Mammary epithelial cell (primary cell): ENCODE measurements at regions of chr6 and their contacts with region 1.

Region 1: GRCh38 chr6:113632220-113632864 is 224.8 kb upstream of the MARCKS start:
- DNase-seq: peak; percentile 99
- H3K4me3 ChIP-seq: peak overlapping the region in 2 of 3 experiments; percentile 24
- H3K27ac ChIP-seq: peak overlapping the region; percentile 96
- H3K4me1 ChIP-seq: peaks cover 41% of the 10 kb centered on the region
- H3K27me3 ChIP-seq: no peaks in the 10 kb centered on the region
- CTCF ChIP-seq: no peak

Region 2: GRCh38 chr6:113352029-113352801 is 280.1 kb before region 1 on chr6:
- CTCF ChIA-PET with region 1: no interaction called
- dilution Hi-C with region 1: no loop called
- in situ Hi-C with region 1: no loop called
- intact Hi-C with region 1: loop called (anchors 5 kb)
- DNase-seq: peak; percentile 75
- H3K4me3 ChIP-seq: no peak overlapping the region
- H3K27ac ChIP-seq: peak overlapping the region; percentile 75
- H3K4me1 ChIP-seq: peaks cover 45% of the 10 kb centered on the region
- H3K27me3 ChIP-seq: no peaks in the 10 kb centered on the region
- CTCF ChIP-seq: no peak

Region 3: DNA sequence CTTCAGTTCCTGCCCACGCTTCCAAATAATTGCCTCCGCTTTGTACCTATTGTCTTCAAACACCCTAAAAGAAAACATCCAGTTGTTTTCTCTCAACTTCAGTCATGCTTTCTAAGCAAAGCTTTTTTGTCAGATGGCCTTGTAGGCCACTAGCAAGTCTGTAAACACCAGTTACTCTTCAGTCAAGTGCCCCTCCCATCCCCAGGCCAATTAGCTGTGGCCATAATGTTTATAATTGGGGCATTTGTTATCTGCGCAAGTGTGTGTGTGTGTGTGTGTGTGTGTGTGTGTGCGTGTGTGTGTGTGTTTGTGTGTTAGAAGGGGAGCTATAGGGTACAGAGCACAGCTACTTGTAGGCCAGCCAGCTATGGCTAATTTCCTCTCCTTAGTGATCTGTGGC is 47.6 kb before region 1 on chr6:
- CTCF ChIA-PET with region 1: no interaction called
- dilution Hi-C with region 1: no loop called
- in situ Hi-C with region 1: no loop called
- intact Hi-C with region 1: no loop called
- DNase-seq: no peak
- H3K4me3 ChIP-seq: no peak overlapping the region
- H3K27ac ChIP-seq: no peak overlapping the region
- H3K4me1 ChIP-seq: no peaks in the 10 kb centered on the region
- H3K27me3 ChIP-seq: no peaks in the 10 kb centered on the region
- CTCF ChIP-seq: no peak

Region 4: DNA sequence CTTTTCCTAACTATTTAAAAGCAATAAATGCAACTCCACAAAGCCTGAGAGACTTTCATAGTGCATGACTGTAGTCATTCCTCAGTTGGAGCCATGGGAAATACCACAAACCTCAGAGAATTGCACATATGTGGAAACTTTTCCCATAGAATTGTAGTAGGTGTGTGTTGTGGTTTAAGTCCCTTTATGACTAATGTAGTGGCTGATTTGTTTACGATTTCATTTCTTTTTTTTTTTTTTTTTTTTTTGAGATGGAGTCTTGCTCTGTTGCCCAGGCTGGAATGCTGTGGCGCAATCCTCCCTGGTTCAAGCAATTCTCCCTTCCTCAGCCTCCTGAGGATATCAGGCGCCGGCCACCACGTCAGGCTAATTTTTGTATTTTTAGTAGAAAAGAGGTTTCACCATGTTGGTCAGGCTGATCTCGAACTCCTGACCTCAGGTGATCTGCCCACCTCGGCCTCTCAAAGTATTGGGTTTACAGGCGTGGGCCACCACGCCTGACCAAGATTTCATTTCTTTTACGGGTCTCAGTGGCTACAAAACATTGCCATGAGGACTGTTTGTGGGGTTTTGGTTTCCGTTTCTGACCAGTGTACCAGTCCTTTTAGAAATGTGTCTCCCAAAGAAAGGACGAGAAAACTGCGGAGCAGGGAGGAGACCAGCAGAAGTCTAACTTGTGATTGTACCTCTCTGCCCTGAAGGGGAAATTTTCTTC is 12.7 kb after region 1 on chr6:
- CTCF ChIA-PET with region 1: interaction called, 12 read pairs
- dilution Hi-C with region 1: no loop called
- in situ Hi-C with region 1: no loop called
- intact Hi-C with region 1: loop called (anchors 1 kb)
- DNase-seq: peak; percentile 97
- H3K4me3 ChIP-seq: no peak overlapping the region
- H3K27ac ChIP-seq: peak overlapping the region; percentile 86
- H3K4me1 ChIP-seq: peaks cover 25% of the 10 kb centered on the region
- H3K27me3 ChIP-seq: peaks cover 3% of the 10 kb centered on the region
- CTCF ChIP-seq: no peak

Region 5: GRCh38 chr6:113690281-113691259 is 58.2 kb after region 1 on chr6:
- CTCF ChIA-PET with region 1: no interaction called
- dilution Hi-C with region 1: no loop called
- in situ Hi-C with region 1: loop called in 1 of 2 experiments (anchors 10 kb)
- intact Hi-C with region 1: loop called (anchors 1 kb)
- DNase-seq: peak; percentile 94
- H3K4me3 ChIP-seq: no peak overlapping the region
- H3K27ac ChIP-seq: peak overlapping the region; percentile 49
- H3K4me1 ChIP-seq: peaks cover 17% of the 10 kb centered on the region
- H3K27me3 ChIP-seq: no peaks in the 10 kb centered on the region
- CTCF ChIP-seq: no peak